Esophagus squamous epithelium (tissue), 5 donors: ENCODE measurements at regions of chr4 and their contacts with region 1.

Region 1: DNA sequence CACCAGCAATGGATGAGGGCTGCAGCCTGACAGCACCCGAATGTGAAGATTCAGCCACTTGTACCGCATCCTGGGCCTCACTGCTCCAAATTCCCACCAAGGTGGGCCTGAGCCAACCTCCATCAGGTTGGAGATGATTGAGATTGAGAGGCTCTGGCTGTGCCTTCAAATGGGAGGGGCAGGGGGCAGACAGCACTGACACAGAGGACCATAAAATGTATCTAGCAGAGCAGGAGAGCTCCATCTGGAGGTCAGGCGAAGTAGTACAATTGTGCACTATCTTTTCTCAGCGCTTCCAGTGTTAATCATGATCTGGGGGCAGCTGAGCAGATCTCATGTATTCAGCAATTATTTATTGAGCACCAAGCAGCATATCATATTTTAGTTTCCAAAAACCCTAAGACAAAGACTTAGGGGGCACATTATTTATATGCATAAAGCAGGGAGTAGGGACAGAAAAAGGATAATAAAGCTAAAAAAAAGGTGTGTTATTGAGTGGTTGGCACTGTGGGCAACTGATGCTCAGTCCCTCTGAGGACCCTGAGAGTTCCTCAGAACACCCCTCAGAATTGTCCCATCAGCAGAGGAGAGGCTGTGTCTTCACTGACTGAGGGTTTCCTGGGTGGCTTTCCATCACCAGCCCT is 31.6 kb upstream of the C1QTNF7 start:
- DNase-seq: no peak
- H3K4me3 ChIP-seq: no peak overlapping the region
- H3K27ac ChIP-seq: no peak overlapping the region
- H3K4me1 ChIP-seq: peaks cover 9 to 41% (median 35%) of the 10 kb centered on the region in 3 donors
- H3K27me3 ChIP-seq: peaks cover 0 to 27% (median 0%) of the 10 kb centered on the region in 4 donors
- CTCF ChIP-seq: peak in 5 of 6 experiments; percentile 42 to 63 (median 50)
- POLR2A ChIP-seq: no peak

Region 2: DNA sequence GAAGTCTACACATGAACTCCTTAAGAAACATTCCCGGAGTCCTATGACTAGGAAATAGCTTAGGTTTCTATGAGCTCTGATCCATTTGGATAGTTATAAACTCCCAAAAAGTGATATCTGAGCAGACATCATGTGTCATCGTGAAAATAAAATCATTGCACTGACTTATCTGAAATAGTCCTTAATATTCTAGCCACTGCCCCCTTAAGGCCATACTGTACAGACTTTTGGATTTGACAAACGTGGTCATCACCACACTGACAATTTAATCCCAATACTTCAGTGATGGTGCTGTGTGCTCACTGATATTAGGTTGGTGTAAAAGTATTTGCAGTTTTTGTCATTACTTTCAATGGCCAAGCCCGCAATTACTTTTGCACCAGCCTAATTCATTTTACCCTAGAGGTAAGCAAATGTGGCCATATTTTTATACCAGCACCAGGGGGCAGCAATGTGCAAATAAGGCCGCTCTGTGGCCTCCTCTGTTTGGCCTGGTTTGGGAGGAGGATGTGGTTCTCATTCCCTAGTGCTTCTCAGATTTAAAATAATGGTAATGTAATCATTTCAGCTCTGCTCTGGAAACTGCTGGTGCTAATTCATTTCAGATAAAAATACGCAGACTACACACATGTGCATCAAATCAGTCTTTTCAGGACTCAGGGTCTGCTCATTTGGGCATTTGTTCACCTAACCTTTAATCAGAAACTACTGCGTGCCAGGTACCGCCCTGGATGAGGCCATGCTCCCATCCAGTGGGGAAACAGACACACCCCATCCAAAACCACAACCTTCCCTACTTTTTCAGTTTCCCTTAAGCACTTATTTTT is 164.8 kb before region 1 on chr4:
- intact Hi-C with region 1: loop called (anchors 10 kb)
- DNase-seq: no peak
- H3K4me3 ChIP-seq: no peak overlapping the region
- H3K27ac ChIP-seq: no peak overlapping the region
- H3K4me1 ChIP-seq: peaks cover 0 to 37% (median 16%) of the 10 kb centered on the region in 3 donors
- H3K27me3 ChIP-seq: no peaks in the 10 kb centered on the region
- CTCF ChIP-seq: peak; percentile 36 to 77 (median 68)
- POLR2A ChIP-seq: no peak

Region 3: GRCh38 chr4:15327311-15328298 is 68.7 kb before region 1 on chr4:
- intact Hi-C with region 1: no loop called
- DNase-seq: no peak
- H3K4me3 ChIP-seq: no peak overlapping the region
- H3K27ac ChIP-seq: peak overlapping the region in 2 of 4 donors; percentile 50 to 66
- H3K4me1 ChIP-seq: peaks cover 0 to 4% (median 0%) of the 10 kb centered on the region in 3 donors
- H3K27me3 ChIP-seq: peaks cover 0 to 3% (median 0%) of the 10 kb centered on the region in 4 donors
- CTCF ChIP-seq: no peak
- POLR2A ChIP-seq: no peak